ENCODE measurements at regions of chrX and their contacts with region 1.

Region 1: DNA sequence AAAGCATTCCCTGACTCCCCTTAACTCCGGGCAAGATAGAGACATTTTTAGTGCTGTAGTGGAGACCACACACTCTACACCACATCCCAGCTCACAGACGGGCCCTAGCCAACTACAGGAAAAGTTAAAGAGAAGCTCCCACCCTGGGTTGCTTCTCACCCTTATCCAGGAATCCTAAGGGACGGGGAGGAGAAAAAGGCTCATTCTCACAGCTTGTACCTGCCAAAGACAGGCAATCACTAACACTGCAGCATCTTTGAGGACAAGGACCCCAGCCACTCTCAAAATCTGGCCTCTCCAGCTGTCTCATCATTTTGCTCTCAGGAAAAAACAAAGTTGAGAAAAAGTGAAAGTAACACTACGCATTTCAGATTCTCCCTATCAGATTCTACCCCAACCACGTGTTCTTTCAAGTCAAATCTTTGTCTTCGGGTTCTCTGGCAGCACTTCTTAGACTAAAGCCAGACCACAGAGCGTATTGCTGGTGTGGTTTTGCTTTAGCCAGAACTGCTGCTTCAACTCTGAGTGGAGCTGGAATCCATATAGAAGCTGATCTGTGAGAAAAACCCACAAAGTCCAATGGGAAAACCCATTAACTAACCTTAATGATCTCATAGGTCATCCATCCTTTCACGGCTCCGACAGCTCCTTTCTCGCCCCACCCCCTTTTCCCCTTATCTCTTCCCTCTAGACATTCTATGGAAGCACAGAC is 605.9 kb upstream of the DIPK2B start:
- DNase-seq: peak; percentile 71
- H3K4me3 ChIP-seq: peak overlapping the region in 2 of 3 experiments; percentile 21 to 65
- H3K27ac ChIP-seq: peak overlapping the region; percentile 97
- H3K4me1 ChIP-seq: peaks cover 47% of the 10 kb centered on the region
- H3K27me3 ChIP-seq: no peaks in the 10 kb centered on the region
- CTCF ChIP-seq: no peak
- POLR2A ChIP-seq: no peak

Region 2: DNA sequence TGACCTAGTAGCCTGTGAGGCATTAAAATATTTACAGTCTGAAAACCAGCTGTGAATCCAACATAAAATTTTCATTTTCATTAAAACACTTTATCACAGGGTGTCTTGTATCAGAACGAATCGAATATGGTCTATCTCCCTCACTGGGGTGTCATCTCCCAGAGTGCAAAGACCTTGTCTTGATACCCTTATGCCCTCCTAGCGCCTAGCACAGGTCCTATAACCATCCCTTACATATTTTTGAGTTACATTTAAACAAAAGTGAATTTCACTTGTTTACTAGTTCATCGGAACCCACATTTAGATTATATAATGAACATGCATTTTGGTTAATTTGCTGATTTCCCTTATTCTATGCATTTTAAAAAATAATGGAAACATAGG is 619.9 kb before region 1 on chrX:
- CTCF ChIA-PET with region 1: no interaction called
- POLR2A ChIA-PET with region 1: no interaction called
- dilution Hi-C with region 1: no loop called
- intact Hi-C with region 1: no loop called
- DNase-seq: no peak
- H3K4me3 ChIP-seq: peak overlapping the region in 1 of 3 experiments; percentile 46
- H3K27ac ChIP-seq: no peak overlapping the region
- H3K4me1 ChIP-seq: peaks cover 9% of the 10 kb centered on the region
- H3K27me3 ChIP-seq: no peaks in the 10 kb centered on the region
- CTCF ChIP-seq: no peak
- POLR2A ChIP-seq: no peak

Region 3: GRCh38 chrX:45445745-45446412 is 360.7 kb before region 1 on chrX:
- CTCF ChIA-PET with region 1: no interaction called
- POLR2A ChIA-PET with region 1: no interaction called
- dilution Hi-C with region 1: no loop called
- intact Hi-C with region 1: no loop called
- DNase-seq: peak; percentile 72
- H3K4me3 ChIP-seq: no peak overlapping the region
- H3K27ac ChIP-seq: peak overlapping the region; percentile 11
- H3K4me1 ChIP-seq: peaks cover 10% of the 10 kb centered on the region
- H3K27me3 ChIP-seq: no peaks in the 10 kb centered on the region
- CTCF ChIP-seq: no peak
- POLR2A ChIP-seq: no peak

Region 4: DNA sequence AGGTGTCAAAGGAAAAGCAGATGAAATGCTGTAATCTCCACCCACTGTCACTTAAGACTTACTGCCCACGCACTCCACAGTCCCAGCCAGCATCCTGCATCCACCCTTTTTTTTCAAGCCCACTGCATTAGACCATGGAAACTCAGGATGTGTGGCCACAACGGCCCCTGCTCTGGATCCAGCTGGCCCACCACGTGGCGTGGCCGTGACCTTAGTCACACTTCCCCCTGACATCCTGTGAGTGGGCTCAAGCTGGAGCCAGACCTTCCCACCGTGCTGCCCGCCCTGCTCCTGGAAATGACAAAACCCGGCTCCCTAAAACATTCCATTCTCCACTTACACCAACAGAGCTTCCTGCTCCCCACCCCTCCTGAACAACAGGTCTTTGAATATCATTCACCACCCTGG is 17.6 kb before region 1 on chrX:
- CTCF ChIA-PET with region 1: interaction called, 9 read pairs
- POLR2A ChIA-PET with region 1: no interaction called
- dilution Hi-C with region 1: no loop called
- intact Hi-C with region 1: loop called (anchors 2 kb)
- DNase-seq: peak; percentile 79
- H3K4me3 ChIP-seq: peak overlapping the region in 1 of 3 experiments; percentile 14
- H3K27ac ChIP-seq: peak overlapping the region; percentile 78
- H3K4me1 ChIP-seq: peaks cover 28% of the 10 kb centered on the region
- H3K27me3 ChIP-seq: no peaks in the 10 kb centered on the region
- CTCF ChIP-seq: no peak
- POLR2A ChIP-seq: peak; percentile 33

Measured in endothelial cell of umbilical vein (primary cell).